CD8-positive, alpha-beta T cell (primary cell): ENCODE measurements at regions of chr11 and their contacts with region 1.

Region 1: GRCh38 chr11:128522055-128522942 is 65.1 kb downstream of the ETS1 start:
- DNase-seq: peak; percentile 80 to 96 (median 91)
- ATAC-seq: peak; percentile 62
- H3K4me3 ChIP-seq: peak overlapping the region; percentile 94 to 97
- H3K4me3 Mint-ChIP-seq: peak overlapping the region; percentile 98
- H3K27ac ChIP-seq: peak overlapping the region; percentile 86 to 91
- H3K27ac Mint-ChIP-seq: peak overlapping the region; percentile 98
- H3K4me1 ChIP-seq: peaks cover 44% of the 10 kb centered on the region
- H3K4me1 Mint-ChIP-seq: peaks cover 50% of the 10 kb centered on the region
- H3K27me3 ChIP-seq: no peaks in the 10 kb centered on the region
- H3K27me3 Mint-ChIP-seq: no peaks in the 10 kb centered on the region
- CTCF ChIP-seq: no peak

Region 2: DNA sequence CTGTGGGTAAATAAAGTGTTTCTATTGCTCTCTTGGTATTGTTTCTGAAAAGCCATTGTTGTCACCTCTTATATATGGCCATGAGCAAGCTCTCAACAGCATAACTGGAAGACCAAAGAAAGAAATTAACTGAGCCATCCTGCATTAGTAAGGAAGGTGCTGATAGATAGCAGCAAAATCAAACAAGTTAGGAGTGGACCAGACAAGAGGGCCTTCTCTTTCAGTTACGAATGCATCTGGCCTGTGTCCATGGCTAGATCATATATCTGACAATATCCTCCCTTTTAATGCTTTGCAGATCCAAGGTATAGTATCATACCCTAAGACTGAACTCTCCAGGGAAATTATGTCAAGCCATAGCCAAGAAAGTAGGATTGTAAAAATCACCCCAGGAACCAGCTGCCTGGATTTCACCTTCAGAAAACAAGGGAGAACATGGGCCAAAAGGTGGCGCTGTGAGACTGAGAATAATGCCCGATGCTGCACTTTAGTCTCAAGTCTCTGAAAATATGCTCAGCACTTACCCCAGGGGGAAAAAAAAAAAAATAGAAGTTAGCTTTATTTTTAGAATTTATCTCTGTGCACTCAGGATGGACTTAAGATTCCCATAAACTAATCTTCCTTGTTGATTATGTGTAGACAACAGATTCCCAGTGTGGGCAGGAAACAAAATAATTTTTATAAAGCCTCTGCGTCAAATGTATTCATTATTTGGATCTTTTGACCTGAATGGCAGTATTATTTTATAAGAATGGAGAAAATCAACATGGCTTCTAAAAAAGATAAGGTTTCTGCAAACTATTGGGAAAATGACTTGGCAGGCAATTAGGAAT is 350.0 kb before region 1 on chr11:
- CTCF ChIA-PET with region 1: interaction called, 7 read pairs
- POLR2A ChIA-PET with region 1: no interaction called
- intact Hi-C with region 1: loop called in 1 of 2 experiments (anchors 5 kb)
- DNase-seq: peak; percentile 76 to 91 (median 86)
- ATAC-seq: peak; percentile 89
- H3K4me3 ChIP-seq: no peak overlapping the region
- H3K4me3 Mint-ChIP-seq: no peak overlapping the region
- H3K27ac ChIP-seq: no peak overlapping the region
- H3K27ac Mint-ChIP-seq: no peak overlapping the region
- H3K4me1 ChIP-seq: no peaks in the 10 kb centered on the region
- H3K4me1 Mint-ChIP-seq: peaks cover 3% of the 10 kb centered on the region
- H3K27me3 ChIP-seq: no peaks in the 10 kb centered on the region
- H3K27me3 Mint-ChIP-seq: no peaks in the 10 kb centered on the region
- CTCF ChIP-seq: peak; percentile 88

Region 3: DNA sequence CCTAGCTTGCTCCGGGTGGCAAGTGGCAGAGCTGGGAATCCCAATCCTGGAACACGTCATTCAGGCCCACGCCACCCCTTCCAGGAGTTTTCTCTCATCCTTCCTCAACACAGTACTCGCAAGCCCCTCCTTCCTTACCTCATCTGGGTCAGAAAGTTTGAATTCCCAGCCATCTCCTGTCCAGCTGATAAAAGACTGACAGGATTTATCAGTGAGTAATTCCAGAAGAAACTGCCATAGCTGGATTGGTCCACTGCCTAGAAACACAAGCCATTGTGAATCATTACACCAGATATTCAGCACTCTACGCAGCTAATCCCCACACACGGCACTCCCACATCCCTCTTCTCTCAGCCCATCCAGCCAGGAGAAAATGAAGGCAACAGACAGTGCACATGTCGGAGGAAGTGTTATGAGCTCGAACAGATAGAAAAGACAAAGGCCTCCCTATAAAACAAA is 58.9 kb before region 1 on chr11:
- CTCF ChIA-PET with region 1: interaction called, 9 read pairs
- POLR2A ChIA-PET with region 1: interaction called, 185 read pairs
- intact Hi-C with region 1: no loop called
- DNase-seq: peak in 1 of 9 experiments; percentile 19
- ATAC-seq: no peak
- H3K4me3 ChIP-seq: no peak overlapping the region
- H3K4me3 Mint-ChIP-seq: peak overlapping the region; percentile 70
- H3K27ac ChIP-seq: peak overlapping the region; percentile 68 to 88
- H3K27ac Mint-ChIP-seq: peak overlapping the region; percentile 94
- H3K4me1 ChIP-seq: peaks cover 89% of the 10 kb centered on the region
- H3K4me1 Mint-ChIP-seq: peaks cover 97% of the 10 kb centered on the region
- H3K27me3 ChIP-seq: no peaks in the 10 kb centered on the region
- H3K27me3 Mint-ChIP-seq: no peaks in the 10 kb centered on the region
- CTCF ChIP-seq: no peak

Region 4: GRCh38 chr11:128497061-128497775 is 25.1 kb before region 1 on chr11:
- CTCF ChIA-PET with region 1: interaction called, 173 read pairs
- POLR2A ChIA-PET with region 1: interaction called, 270 read pairs
- intact Hi-C with region 1: no loop called
- DNase-seq: peak in 2 of 9 experiments; percentile 51 to 64
- ATAC-seq: no peak
- H3K4me3 ChIP-seq: peak overlapping the region; percentile 24 to 43
- H3K4me3 Mint-ChIP-seq: peak overlapping the region; percentile 83
- H3K27ac ChIP-seq: peak overlapping the region; percentile 49 to 75
- H3K27ac Mint-ChIP-seq: peak overlapping the region; percentile 98
- H3K4me1 ChIP-seq: peaks cover 98% of the 10 kb centered on the region
- H3K4me1 Mint-ChIP-seq: peaks cover 96% of the 10 kb centered on the region
- H3K27me3 ChIP-seq: no peaks in the 10 kb centered on the region
- H3K27me3 Mint-ChIP-seq: no peaks in the 10 kb centered on the region
- CTCF ChIP-seq: no peak

Region 5: GRCh38 chr11:128610721-128611617 is 88.7 kb after region 1 on chr11:
- CTCF ChIA-PET with region 1: interaction called, 4 read pairs
- POLR2A ChIA-PET with region 1: interaction called, 13 read pairs
- intact Hi-C with region 1: loop called in 1 of 2 experiments (anchors 1 kb)
- DNase-seq: peak; percentile 50 to 87 (median 74)
- ATAC-seq: peak; percentile 88
- H3K4me3 ChIP-seq: peak overlapping the region in 1 of 2 experiments; percentile 9
- H3K4me3 Mint-ChIP-seq: peak overlapping the region; percentile 57
- H3K27ac ChIP-seq: peak overlapping the region; percentile 50 to 70
- H3K27ac Mint-ChIP-seq: peak overlapping the region; percentile 92
- H3K4me1 ChIP-seq: peaks cover 63% of the 10 kb centered on the region
- H3K4me1 Mint-ChIP-seq: peaks cover 87% of the 10 kb centered on the region
- H3K27me3 ChIP-seq: no peaks in the 10 kb centered on the region
- H3K27me3 Mint-ChIP-seq: no peaks in the 10 kb centered on the region
- CTCF ChIP-seq: no peak

Region 6: GRCh38 chr11:128757235-128757711 is 235.0 kb after region 1 on chr11:
- CTCF ChIA-PET with region 1: interaction called, 3 read pairs
- POLR2A ChIA-PET with region 1: no interaction called
- intact Hi-C with region 1: loop called in 1 of 2 experiments (anchors 5 kb)
- DNase-seq: peak; percentile 48 to 90 (median 71)
- ATAC-seq: peak; percentile 99
- H3K4me3 ChIP-seq: no peak overlapping the region
- H3K4me3 Mint-ChIP-seq: peak overlapping the region; percentile 35
- H3K27ac ChIP-seq: peak overlapping the region in 1 of 2 experiments; percentile 30
- H3K27ac Mint-ChIP-seq: peak overlapping the region; percentile 88
- H3K4me1 ChIP-seq: peaks cover 67% of the 10 kb centered on the region
- H3K4me1 Mint-ChIP-seq: peaks cover 89% of the 10 kb centered on the region
- H3K27me3 ChIP-seq: no peaks in the 10 kb centered on the region
- H3K27me3 Mint-ChIP-seq: no peaks in the 10 kb centered on the region
- CTCF ChIP-seq: peak; percentile 76